ENCODE measurements at regions of chr1 and their contacts with region 1.

Region 1: DNA sequence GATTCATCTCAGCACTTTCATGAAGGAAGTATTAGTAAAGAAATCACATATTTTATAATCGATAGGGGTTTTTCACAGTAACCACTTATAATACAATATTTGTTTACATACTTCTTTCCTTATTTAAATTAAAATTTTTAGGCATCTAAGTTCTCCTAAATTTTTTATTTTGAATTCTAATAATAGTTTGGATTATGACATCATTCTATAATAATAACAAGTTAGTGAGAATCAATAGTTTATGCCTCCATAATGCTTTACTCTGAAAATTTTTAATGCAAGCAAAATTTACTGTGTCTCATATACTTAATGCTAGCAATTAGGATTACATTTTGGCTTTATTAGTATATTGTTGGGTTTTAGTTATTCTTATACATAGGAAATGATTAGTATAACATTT is 252.2 kb downstream of the ZP4 start:
- DNase-seq: no peak
- H3K4me3 ChIP-seq: no peak overlapping the region
- H3K27ac ChIP-seq: no peak overlapping the region
- H3K4me1 ChIP-seq: no peaks in the 10 kb centered on the region
- H3K27me3 ChIP-seq: no peaks in the 10 kb centered on the region
- CTCF ChIP-seq: no peak
- POLR2A ChIP-seq: no peak

Region 2: DNA sequence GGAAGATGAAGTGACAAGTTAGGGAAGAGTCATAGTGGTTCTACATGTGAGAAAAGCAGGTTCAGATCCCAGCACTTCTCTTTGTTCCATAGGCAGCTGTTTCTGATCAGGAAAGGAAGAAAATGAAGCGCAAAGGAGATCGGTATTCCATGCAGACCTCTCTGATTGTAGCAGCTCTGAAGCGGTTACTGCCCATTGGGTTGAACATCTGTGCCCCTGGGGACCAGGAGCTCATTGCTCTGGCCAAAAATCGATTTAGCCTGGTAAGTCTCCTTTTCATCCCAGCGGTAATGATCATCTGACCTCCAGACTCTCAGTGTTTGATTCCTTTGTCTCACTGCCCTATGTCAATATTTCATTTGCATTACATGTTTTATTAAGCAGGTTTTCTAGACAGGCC is 78.6 kb after region 1 on chr1:
- intact Hi-C with region 1: loop called (anchors 2 kb)
- DNase-seq: no peak
- H3K4me3 ChIP-seq: no peak overlapping the region
- H3K27ac ChIP-seq: no peak overlapping the region
- H3K4me1 ChIP-seq: no peaks in the 10 kb centered on the region
- H3K27me3 ChIP-seq: no peaks in the 10 kb centered on the region
- CTCF ChIP-seq: no peak
- POLR2A ChIP-seq: no peak

Region 3: GRCh38 chr1:237851210-237851845 is 212.8 kb after region 1 on chr1:
- intact Hi-C with region 1: no loop called
- DNase-seq: no peak
- H3K4me3 ChIP-seq: no peak overlapping the region
- H3K27ac ChIP-seq: no peak overlapping the region
- H3K4me1 ChIP-seq: no peaks in the 10 kb centered on the region
- H3K27me3 ChIP-seq: no peaks in the 10 kb centered on the region
- CTCF ChIP-seq: peak in 1 of 3 experiments; percentile 5
- POLR2A ChIP-seq: no peak

Measured in vagina (tissue), 2 donors.